Sigmoid colon (tissue), 7 donors: ENCODE measurements at regions of chr10 and their contacts with region 1.

Region 1: DNA sequence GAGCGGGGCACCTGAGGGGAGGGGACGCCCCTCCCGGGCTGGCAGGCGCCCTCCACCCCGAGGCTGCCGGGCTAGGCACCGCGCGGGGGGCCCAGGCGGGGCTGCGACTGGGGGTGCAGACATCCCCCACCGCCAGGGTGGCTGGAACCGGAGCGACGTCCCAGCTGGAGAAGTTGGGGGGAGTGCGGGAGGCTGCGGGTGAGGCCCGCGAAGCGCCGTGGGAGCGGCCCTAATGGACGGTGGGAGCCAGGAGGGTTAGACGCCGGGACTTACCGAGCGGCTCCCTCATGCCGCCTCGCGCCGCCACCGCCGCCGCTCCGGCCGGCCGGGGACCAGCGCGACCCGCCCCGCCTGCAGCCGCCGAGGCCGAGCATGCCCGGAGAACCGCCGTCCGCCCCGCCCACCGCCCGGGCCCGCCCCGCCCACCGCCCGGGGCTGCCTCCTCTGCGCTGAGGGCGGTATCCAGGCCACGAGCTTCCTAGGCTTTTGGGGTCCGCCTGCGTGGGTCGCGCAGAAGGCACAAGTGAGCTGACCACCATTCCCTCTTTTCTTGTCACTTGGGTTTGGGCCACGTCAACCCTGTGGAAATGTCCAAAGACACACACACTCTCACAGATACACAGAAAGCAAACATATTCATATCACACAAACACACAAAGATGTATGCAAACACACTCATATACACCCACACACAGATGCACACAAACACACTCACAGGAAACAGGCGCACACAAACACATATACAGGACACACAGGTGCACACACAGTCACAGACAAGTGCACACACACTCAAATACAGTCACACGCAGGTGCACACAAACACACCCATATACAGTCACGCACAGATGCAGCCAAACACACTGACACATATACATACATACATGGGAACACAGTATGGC is at the start of gene JCAD:
- DNase-seq: peak; percentile 89
- H3K4me3 ChIP-seq: peak within 1 kb of the TSS; percentile 83 to 99 (median 87)
- H3K27ac ChIP-seq: peak within 1 kb of the TSS; percentile 88 to 94 (median 92)
- H3K4me1 ChIP-seq: peaks cover 0 to 60% (median 47%) of the 10 kb centered on the region in 4 donors
- H3K27me3 ChIP-seq: no peaks in the 10 kb centered on the region
- CTCF ChIP-seq: peak in 1 of 4 experiments; percentile 22
- EP300 ChIP-seq: no peak
- POLR2A ChIP-seq: no peak
- total RNA-seq, gene JCAD: 99.7 to 141 (median 123) TPM

Region 2: GRCh38 chr10:30027057-30028005 is 32.1 kb before region 1 on chr10:
- intact Hi-C with region 1: loop called (anchors 2 kb)
- DNase-seq: peak; percentile 89
- H3K4me3 ChIP-seq: no peak overlapping the region
- H3K27ac ChIP-seq: peak overlapping the region; percentile 57 to 85 (median 80)
- H3K4me1 ChIP-seq: peaks cover 0 to 50% (median 44%) of the 10 kb centered on the region in 4 donors
- H3K27me3 ChIP-seq: no peaks in the 10 kb centered on the region
- CTCF ChIP-seq: no peak
- EP300 ChIP-seq: no peak
- POLR2A ChIP-seq: no peak

Region 3: GRCh38 chr10:30114871-30115625 is 55.6 kb after region 1 on chr10:
- intact Hi-C with region 1: loop called (anchors 5 kb)
- DNase-seq: peak; percentile 79
- H3K4me3 ChIP-seq: peak overlapping the region in 3 of 4 donors; percentile 30 to 40 (median 39)
- H3K27ac ChIP-seq: peak overlapping the region in 3 of 4 donors; percentile 77 to 82 (median 82)
- H3K4me1 ChIP-seq: peaks cover 0 to 40% (median 20%) of the 10 kb centered on the region in 4 donors
- H3K27me3 ChIP-seq: no peaks in the 10 kb centered on the region
- CTCF ChIP-seq: no peak
- EP300 ChIP-seq: no peak
- POLR2A ChIP-seq: no peak

Region 4: GRCh38 chr10:30186371-30186875 is 127.0 kb after region 1 on chr10:
- intact Hi-C with region 1: loop called (anchors 10 kb)
- DNase-seq: no peak
- H3K4me3 ChIP-seq: peak overlapping the region in 2 of 4 donors; percentile 1 to 19
- H3K27ac ChIP-seq: peak overlapping the region; percentile 51 to 65 (median 60)
- H3K4me1 ChIP-seq: peaks cover 0 to 82% (median 70%) of the 10 kb centered on the region in 4 donors
- H3K27me3 ChIP-seq: no peaks in the 10 kb centered on the region
- CTCF ChIP-seq: no peak
- EP300 ChIP-seq: no peak
- POLR2A ChIP-seq: no peak

Region 5: DNA sequence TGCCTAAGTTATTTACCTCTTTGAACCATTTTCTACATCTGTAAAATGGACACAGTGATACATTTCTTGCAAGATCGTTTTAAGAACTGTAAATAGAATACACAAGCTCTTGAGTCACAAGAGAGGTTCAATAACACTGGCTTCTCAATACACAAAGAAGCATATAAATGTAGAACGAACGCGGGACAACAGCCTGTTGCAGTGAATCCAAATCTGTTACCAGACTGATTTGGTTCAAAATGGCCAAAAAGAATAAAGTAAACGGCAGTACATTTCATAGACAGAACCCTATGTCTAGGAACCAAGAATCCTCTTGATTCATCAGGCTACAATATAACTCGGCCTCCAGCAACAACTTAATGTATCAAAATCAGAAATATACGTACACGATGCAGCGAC is 288.9 kb after region 1 on chr10:
- intact Hi-C with region 1: loop called (anchors 10 kb)
- DNase-seq: no peak
- H3K4me3 ChIP-seq: peak overlapping the region; percentile 81 to 94 (median 89)
- H3K27ac ChIP-seq: peak overlapping the region; percentile 78 to 89 (median 83)
- H3K4me1 ChIP-seq: peaks cover 0 to 31% (median 26%) of the 10 kb centered on the region in 4 donors
- H3K27me3 ChIP-seq: no peaks in the 10 kb centered on the region
- CTCF ChIP-seq: no peak
- EP300 ChIP-seq: no peak
- POLR2A ChIP-seq: no peak